ENCODE measurements at regions of chr19 and their contacts with region 1.

Region 1: DNA sequence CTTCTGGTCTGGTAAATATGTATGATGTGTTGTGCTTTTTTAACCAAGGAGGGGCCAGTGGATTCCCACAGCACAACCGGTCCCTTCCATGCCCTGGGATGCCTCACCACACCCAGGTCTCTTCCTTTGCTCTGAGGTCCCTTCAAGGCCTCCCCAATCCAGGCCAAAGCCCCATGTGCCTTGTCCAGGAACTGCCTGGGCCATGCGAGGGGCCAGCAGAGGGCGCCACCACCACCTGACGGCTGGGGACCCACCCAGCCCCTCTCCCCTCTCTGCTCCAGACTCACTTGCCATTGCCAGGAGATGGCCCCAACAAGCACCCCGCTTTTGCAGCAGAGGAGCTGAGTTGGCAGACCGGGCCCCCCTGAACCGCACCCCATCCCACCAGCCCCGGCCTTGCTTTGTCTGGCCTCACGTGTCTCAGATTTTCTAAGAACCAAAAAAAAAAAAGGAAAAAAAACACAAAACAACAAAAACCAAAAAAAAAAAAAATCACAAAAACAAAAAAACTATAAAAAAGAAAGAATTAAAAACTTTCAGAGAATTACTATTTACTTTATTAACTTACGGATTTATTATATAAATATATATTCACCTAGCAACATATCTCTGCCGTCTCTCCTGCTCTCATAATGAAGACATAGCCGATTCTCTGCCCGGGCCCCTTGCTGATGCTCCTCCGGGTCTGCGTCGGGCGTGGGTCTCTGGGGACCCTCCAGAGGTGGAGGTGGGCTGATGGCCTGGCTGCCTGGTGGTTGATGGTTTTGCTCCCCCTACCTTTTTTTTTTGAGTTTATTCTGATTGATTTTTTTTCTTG is 14.4 kb downstream of the CAPN12 start:
- DNase-seq: peak; percentile 47 to 90
- H3K4me3 ChIP-seq: no peak overlapping the region
- H3K4me1 ChIP-seq: no peaks in the 10 kb centered on the region
- H3K27me3 ChIP-seq: no peaks in the 10 kb centered on the region

Region 2: DNA sequence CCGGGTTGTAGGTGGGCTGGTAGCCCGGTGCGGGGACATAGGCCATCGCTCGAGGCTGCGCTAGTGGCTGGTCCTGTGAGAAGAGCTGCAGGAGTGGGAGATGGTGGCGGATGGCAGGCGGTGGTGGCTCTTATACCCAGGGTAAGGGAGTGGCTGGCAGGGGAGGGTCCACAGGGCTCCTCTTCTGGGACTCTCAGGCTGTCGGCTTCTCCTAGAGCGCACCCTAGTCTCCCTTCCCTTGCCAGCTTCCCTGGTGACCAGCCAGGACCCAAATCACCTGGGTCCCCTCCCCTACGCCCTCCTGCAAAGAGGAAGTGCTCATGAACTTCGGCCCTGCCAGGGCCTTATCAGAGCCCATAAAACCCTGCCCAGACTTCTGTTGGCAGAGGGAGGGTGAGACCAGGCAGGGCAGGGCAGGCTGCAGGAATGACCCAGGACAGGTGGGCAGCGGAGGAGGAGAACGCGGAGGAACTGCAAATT is 83.0 kb after region 1 on chr19 and contains the start of gene LGALS4:
- in situ Hi-C with region 1: no loop called
- DNase-seq: no peak
- H3K4me3 ChIP-seq: no peak within 1 kb of the TSS
- H3K4me1 ChIP-seq: 0 out of 2 replicates have a peak, but pooled peaks cover 3% of the 10 kb centered on the region
- H3K27me3 ChIP-seq: no peaks in the 10 kb centered on the region

Region 3: GRCh38 chr19:38929929-38930775 is 200.3 kb after region 1 on chr19 and contains the start of gene SARS2:
- in situ Hi-C with region 1: loop called (anchors 10 kb)
- DNase-seq: peak; percentile 91 to 94
- H3K4me3 ChIP-seq: peak within 1 kb of the TSS; percentile 74
- H3K4me1 ChIP-seq: peaks cover 4% of the 10 kb centered on the region
- H3K27me3 ChIP-seq: no peaks in the 10 kb centered on the region